Activated CD8-positive, alpha-beta T cell treated with anti-CD3 and anti-CD28 coated beads, Interleukin-2, amount 10 ng/mL, durations not matched to agents 7 days and 5 days (primary cell): ENCODE measurements at regions of chr3 and their contacts with region 1.

Region 1: DNA sequence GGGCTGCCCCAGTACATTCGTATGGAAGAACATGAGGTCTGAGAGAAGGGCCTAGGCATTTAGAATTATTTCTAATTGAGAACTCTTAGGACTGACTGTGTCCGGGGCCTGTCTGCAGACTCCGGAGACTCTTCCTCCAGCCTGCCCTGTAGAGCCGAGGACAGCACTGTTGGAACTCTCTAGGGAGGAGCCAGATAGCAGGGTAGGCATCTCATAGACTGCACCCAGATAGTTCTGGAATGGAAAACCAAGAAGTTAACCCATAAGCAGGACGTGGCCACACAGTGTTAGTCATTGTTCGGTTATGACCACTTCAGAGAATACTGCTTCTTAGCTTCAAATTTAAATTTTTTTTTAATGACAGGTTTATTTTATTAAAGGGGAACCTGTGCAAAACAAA is 59.5 kb downstream of the SNRK start:
- DNase-seq: peak; percentile 55
- ATAC-seq: peak; percentile 56
- H3K4me3 Mint-ChIP-seq: peak overlapping the region; percentile 43
- H3K27ac Mint-ChIP-seq: peak overlapping the region; percentile 97
- H3K4me1 Mint-ChIP-seq: peaks cover 77% of the 10 kb centered on the region
- H3K27me3 Mint-ChIP-seq: no peaks in the 10 kb centered on the region

Region 2: GRCh38 chr3:43104660-43105595 is 240.9 kb before region 1 on chr3:
- CTCF ChIA-PET with region 1: no interaction called
- POLR2A ChIA-PET with region 1: no interaction called
- DNase-seq: peak; percentile 27
- ATAC-seq: peak; percentile 7
- H3K4me3 Mint-ChIP-seq: peak overlapping the region; percentile 72
- H3K27ac Mint-ChIP-seq: no peak overlapping the region
- H3K4me1 Mint-ChIP-seq: peaks cover 15% of the 10 kb centered on the region
- H3K27me3 Mint-ChIP-seq: no peaks in the 10 kb centered on the region

Region 3: GRCh38 chr3:43279082-43279481 is 66.8 kb before region 1 on chr3:
- CTCF ChIA-PET with region 1: no interaction called
- POLR2A ChIA-PET with region 1: no interaction called
- DNase-seq: no peak
- ATAC-seq: no peak
- H3K4me3 Mint-ChIP-seq: no peak overlapping the region
- H3K27ac Mint-ChIP-seq: no peak overlapping the region
- H3K4me1 Mint-ChIP-seq: peaks cover 10% of the 10 kb centered on the region
- H3K27me3 Mint-ChIP-seq: peaks cover 3% of the 10 kb centered on the region

Region 4: GRCh38 chr3:43296565-43296964 is 49.3 kb before region 1 on chr3:
- CTCF ChIA-PET with region 1: interaction called, 17 read pairs
- POLR2A ChIA-PET with region 1: interaction called, 29 read pairs
- DNase-seq: peak; percentile 80
- ATAC-seq: peak; percentile 94
- H3K4me3 Mint-ChIP-seq: peak overlapping the region; percentile 79
- H3K27ac Mint-ChIP-seq: peak overlapping the region; percentile 92
- H3K4me1 Mint-ChIP-seq: peaks cover 78% of the 10 kb centered on the region
- H3K27me3 Mint-ChIP-seq: no peaks in the 10 kb centered on the region

Region 5: DNA sequence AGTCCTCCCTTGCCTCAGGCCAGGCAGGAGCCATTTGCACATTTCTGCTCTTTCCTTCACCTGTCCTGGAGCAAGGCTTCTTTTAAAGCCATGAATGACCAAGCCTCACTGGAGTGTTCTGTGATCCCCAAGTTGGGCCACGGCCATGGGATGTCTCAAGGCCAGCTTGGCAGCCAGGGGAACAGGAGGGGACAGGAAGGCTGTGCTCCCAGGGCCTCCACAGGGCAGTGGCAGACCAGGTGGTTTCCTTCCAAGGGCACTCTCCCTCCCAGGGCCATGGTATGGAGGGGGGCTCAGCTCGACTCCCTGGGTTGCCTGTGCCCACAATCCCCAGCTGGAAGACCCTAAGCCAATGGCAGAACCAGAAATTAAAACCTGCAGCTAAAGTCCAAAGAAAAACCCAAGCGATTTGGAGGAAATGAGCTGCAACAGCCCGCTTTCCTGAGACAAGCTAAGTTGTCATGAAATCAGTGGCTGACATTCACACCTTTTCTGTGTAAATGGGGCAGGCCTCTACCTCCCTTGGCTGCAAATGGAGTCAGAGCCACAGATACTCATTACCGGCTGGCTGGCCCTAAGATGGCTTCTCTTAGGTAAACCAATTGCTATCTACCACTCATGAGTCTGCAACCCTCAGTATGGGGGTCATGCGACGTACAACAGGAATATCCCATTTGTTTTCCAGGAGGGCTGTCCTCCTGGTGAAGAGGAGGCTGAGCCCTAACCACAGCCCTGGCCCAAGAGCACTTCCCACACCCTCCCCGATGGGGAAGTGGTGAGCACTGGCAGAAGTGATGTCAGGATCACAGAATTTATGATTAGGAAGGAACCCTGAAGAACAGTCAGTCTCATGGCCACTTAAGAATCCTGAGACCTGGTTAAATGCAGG is 23.8 kb after region 1 on chr3:
- CTCF ChIA-PET with region 1: no interaction called
- POLR2A ChIA-PET with region 1: no interaction called
- DNase-seq: no peak
- ATAC-seq: no peak
- H3K4me3 Mint-ChIP-seq: no peak overlapping the region
- H3K27ac Mint-ChIP-seq: peak overlapping the region; percentile 30
- H3K4me1 Mint-ChIP-seq: peaks cover 8% of the 10 kb centered on the region
- H3K27me3 Mint-ChIP-seq: no peaks in the 10 kb centered on the region